GM12878 (cell line): ENCODE measurements at regions of chr4 and their contacts with region 1.

Region 1: GRCh38 chr4:87006676-87007527 is 72.1 kb downstream of the AFF1 start:
- DNase-seq: peak; percentile 71
- ATAC-seq: peak; percentile 82
- H3K4me3 ChIP-seq: peak overlapping the region; percentile 78
- H3K27ac ChIP-seq: peak overlapping the region; percentile 93
- H3K4me1 ChIP-seq: peaks cover 17% of the 10 kb centered on the region
- H3K27me3 ChIP-seq: no peaks in the 10 kb centered on the region
- CTCF ChIP-seq: peak in 2 of 3 experiments; percentile 33 to 34; a peak in 3 of 6 replicates
- EP300 ChIP-seq: 0 out of 4 replicates have a peak, but pooled peaks of 1 of the 2 experiments have one; percentile 17
- POLR2A ChIP-seq: peak; percentile 97
- RAD21 ChIP-seq: no peak

Region 2: DNA sequence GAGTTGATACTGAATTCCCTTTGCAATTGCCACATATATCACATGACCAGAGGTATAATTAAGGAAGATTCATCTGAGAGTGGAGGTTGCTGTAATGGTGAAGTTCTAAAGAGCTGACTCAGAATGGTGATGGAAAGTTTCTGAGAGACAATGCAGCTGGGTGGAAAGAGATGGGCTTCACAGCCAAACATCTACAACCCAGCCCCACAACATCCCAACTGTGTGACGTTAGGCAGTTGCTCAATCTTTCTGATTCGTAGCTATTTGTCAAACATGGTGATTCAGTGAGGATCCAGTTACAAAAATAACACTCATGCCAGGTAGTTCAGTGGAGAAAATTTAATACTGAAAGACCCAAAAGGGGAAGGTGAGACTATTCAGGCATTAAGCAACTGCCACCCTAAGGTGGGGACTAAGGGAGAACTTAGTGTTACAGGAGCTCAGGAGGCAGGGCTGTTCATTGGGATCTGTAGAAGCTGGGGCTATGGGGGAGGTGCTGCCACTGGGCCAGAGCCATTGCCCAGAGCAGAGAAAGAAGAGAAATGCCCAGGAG is 79.0 kb before region 1 on chr4:
- CTCF ChIA-PET with region 1: interaction called, 35 read pairs
- POLR2A ChIA-PET with region 1: interaction called, 123 read pairs
- RAD21 ChIA-PET with region 1: interaction called, 37 read pairs
- SMC1A ChIA-PET with region 1: interaction called, 97 read pairs
- in situ Hi-C with region 1: no loop called
- intact Hi-C with region 1: no loop called
- DNase-seq: no peak
- ATAC-seq: peak; percentile 12; the same call in 2 of the 3 replicates
- H3K4me3 ChIP-seq: no peak overlapping the region
- H3K27ac ChIP-seq: no peak overlapping the region; the same call in 1 of the 2 replicates
- H3K4me1 ChIP-seq: peaks cover 15% of the 10 kb centered on the region
- H3K27me3 ChIP-seq: no peaks in the 10 kb centered on the region
- CTCF ChIP-seq: no peak
- EP300 ChIP-seq: no peak
- POLR2A ChIP-seq: no peak
- RAD21 ChIP-seq: no peak

Region 3: GRCh38 chr4:86961605-86962295 is 45.2 kb before region 1 on chr4:
- CTCF ChIA-PET with region 1: interaction called, 10 read pairs
- POLR2A ChIA-PET with region 1: interaction called, 49 read pairs
- RAD21 ChIA-PET with region 1: interaction called, 22 read pairs
- SMC1A ChIA-PET with region 1: interaction called, 107 read pairs
- in situ Hi-C with region 1: no loop called
- intact Hi-C with region 1: loop called (anchors 2 kb)
- DNase-seq: peak; percentile 85
- ATAC-seq: peak; percentile 92
- H3K4me3 ChIP-seq: peak overlapping the region; percentile 61; the same call in 1 of the 2 replicates
- H3K27ac ChIP-seq: peak overlapping the region; percentile 80
- H3K4me1 ChIP-seq: peaks cover 70% of the 10 kb centered on the region
- H3K27me3 ChIP-seq: no peaks in the 10 kb centered on the region
- CTCF ChIP-seq: no peak
- EP300 ChIP-seq: peak; percentile 79 to 84; a peak in 3 of 4 replicates
- POLR2A ChIP-seq: peak; percentile 63
- RAD21 ChIP-seq: no peak

Region 4: DNA sequence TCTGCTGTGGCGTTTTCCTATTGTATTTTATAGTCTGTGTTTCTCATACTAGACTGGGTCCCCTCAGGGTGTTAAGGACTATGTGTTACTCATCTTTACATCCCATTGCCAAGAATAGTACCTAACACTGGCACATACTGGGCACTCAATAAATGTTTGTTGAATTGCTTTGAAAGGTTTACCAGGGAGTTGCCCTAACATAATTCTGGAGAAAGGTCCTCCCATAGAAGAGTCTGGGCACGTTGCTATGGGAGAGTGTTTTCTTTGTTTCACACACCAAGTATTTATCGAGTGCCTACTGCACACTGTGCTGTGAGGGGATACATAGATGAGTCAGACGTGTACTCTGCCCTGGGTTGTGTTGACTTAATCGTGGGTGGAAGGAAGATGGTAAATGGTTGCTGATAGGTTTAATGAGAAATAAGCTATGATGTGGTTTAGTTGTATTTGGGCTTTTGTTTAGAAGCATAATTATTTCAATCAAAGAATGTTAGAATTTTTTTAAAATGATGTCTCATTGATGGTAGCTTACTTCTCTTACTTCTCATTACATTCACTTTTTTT is 29.2 kb before region 1 on chr4:
- CTCF ChIA-PET with region 1: interaction called, 4 read pairs
- POLR2A ChIA-PET with region 1: interaction called, 9 read pairs
- RAD21 ChIA-PET with region 1: interaction called, 53 read pairs
- SMC1A ChIA-PET with region 1: interaction called, 18 read pairs
- in situ Hi-C with region 1: no loop called
- intact Hi-C with region 1: loop called (anchors 2 kb)
- DNase-seq: peak; percentile 67
- ATAC-seq: peak; percentile 96
- H3K4me3 ChIP-seq: peak overlapping the region; percentile 31; the same call in 1 of the 2 replicates
- H3K27ac ChIP-seq: peak overlapping the region; percentile 55
- H3K4me1 ChIP-seq: peaks cover 41% of the 10 kb centered on the region
- H3K27me3 ChIP-seq: no peaks in the 10 kb centered on the region
- CTCF ChIP-seq: no peak
- EP300 ChIP-seq: peak in 1 of 2 experiments; percentile 74; a peak in 1 of 4 replicates
- POLR2A ChIP-seq: no peak
- RAD21 ChIP-seq: no peak

Region 5: DNA sequence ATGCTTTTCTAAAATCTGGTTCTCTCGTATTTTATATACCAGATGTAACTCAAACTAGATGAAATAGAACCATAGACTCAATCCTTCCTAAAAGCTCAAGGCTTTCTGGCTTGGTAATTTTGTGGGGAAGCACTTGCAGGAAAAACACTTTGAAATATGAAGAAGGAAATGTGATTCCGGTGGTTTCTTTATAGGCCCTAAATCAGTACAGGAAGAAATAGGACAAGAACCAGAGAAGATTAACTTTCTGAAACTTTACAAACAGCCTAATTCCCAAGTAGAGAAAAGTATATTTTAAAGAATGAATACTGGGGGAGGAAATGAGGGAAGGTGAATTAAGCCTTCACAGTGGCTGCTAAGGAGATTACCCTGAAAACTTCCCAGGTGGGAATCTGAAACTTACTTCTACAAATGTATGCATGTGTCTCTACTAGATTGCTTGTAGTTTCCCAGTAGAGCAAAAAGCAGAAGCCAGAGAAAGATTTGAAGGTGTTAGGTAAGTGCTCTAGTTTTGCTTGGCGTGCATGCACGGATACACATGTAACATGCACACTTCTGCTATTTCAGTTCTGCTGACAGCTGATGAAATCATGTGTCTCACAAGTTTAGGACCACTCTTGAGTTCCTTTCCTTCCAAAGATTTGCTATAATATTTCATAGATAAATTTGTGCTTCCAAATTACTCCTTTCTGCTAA is 20.0 kb after region 1 on chr4:
- CTCF ChIA-PET with region 1: interaction called, 8 read pairs
- POLR2A ChIA-PET with region 1: interaction called, 26 read pairs
- RAD21 ChIA-PET with region 1: interaction called, 13 read pairs
- SMC1A ChIA-PET with region 1: interaction called, 26 read pairs
- in situ Hi-C with region 1: no loop called
- intact Hi-C with region 1: loop called (anchors 2 kb)
- DNase-seq: peak; percentile 91
- ATAC-seq: peak; percentile 92
- H3K4me3 ChIP-seq: peak overlapping the region; percentile 8; the same call in 1 of the 2 replicates
- H3K27ac ChIP-seq: peak overlapping the region; percentile 98
- H3K4me1 ChIP-seq: peaks cover 46% of the 10 kb centered on the region
- H3K27me3 ChIP-seq: no peaks in the 10 kb centered on the region
- CTCF ChIP-seq: no peak
- EP300 ChIP-seq: peak; percentile 68 to 73; a peak in 2 of 4 replicates
- POLR2A ChIP-seq: no peak
- RAD21 ChIP-seq: peak; percentile 30; the same call in 1 of the 2 replicates

Region 6: DNA sequence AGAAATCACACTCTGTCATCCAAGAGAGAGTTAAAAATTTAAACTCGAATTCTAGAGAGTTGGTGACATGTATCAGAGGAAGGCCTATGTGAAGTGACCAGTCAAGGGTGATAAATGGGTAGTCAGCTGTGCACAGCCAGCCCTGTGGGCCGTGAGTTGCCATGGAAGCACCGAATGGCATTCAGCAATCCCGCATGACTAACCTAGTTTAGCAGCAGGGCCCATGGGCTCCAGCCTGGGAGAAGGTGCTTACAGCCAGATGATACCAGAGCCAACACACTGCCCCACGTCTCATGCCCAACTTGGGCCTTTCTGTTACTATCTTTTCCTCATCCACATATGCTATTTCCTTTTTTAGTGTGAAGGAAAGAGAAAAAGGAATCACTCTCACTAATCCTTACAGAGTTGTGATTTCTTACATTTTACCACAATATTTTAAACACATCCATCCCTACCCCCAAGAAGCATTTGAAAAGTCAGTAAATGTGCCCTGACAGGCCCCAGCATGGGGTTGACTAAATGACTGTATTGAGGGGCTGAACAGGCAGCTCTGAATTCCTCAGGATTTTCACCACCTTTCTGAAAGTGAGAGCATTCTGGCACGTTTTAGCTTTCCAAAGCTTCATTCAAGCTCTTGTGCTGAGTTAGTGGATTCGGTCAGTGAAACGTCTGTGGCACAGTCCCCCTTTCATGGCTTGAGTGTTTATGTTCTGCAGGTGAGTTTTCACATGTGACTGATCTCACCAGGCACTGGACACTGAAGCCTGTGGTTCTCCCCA is 32.1 kb after region 1 on chr4:
- CTCF ChIA-PET with region 1: interaction called, 3 read pairs
- POLR2A ChIA-PET with region 1: interaction called, 4 read pairs
- RAD21 ChIA-PET with region 1: interaction called, 13 read pairs
- SMC1A ChIA-PET with region 1: interaction called, 16 read pairs
- in situ Hi-C with region 1: no loop called
- intact Hi-C with region 1: loop called (anchors 5 kb)
- DNase-seq: no peak
- ATAC-seq: peak; percentile 83
- H3K4me3 ChIP-seq: peak overlapping the region; percentile 5; the same call in 1 of the 2 replicates
- H3K27ac ChIP-seq: peak overlapping the region; percentile 3
- H3K4me1 ChIP-seq: peaks cover 52% of the 10 kb centered on the region
- H3K27me3 ChIP-seq: no peaks in the 10 kb centered on the region
- CTCF ChIP-seq: no peak
- EP300 ChIP-seq: no peak
- POLR2A ChIP-seq: no peak
- RAD21 ChIP-seq: no peak

Region 7: GRCh38 chr4:87073199-87074120 is 66.6 kb after region 1 on chr4:
- CTCF ChIA-PET with region 1: interaction called, 4 read pairs
- POLR2A ChIA-PET with region 1: interaction called, 8 read pairs
- RAD21 ChIA-PET with region 1: interaction called, 20 read pairs
- SMC1A ChIA-PET with region 1: interaction called, 10 read pairs
- in situ Hi-C with region 1: no loop called
- intact Hi-C with region 1: loop called (anchors 5 kb)
- DNase-seq: peak; percentile 93
- ATAC-seq: peak; percentile 93
- H3K4me3 ChIP-seq: peak overlapping the region; percentile 65; the same call in 1 of the 2 replicates
- H3K27ac ChIP-seq: peak overlapping the region; percentile 98
- H3K4me1 ChIP-seq: peaks cover 17% of the 10 kb centered on the region
- H3K27me3 ChIP-seq: no peaks in the 10 kb centered on the region
- CTCF ChIP-seq: no peak
- EP300 ChIP-seq: peak; percentile 65 to 67; a peak in 3 of 4 replicates
- POLR2A ChIP-seq: peak; percentile 62
- RAD21 ChIP-seq: no peak

Region 8: DNA sequence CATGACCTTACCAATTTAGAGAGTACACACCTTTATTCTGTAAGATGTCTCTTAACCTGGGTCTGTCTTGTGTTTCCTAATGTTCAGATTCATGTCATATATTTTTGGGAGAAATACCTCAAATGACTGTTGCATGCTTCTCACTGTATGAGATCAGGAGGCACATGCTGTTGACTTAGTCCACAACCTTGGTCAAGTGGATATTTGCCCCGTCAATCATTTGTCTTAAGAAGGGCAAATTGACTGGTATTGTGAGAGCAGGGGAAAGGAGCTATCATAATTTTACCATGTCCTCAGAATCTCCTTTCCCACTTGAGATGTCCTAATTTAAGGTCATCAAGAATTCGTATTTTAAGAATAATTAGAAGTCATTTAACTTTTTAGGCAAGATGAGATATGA is 426.4 kb after region 1 on chr4:
- CTCF ChIA-PET with region 1: no interaction called
- POLR2A ChIA-PET with region 1: no interaction called
- RAD21 ChIA-PET with region 1: no interaction called
- SMC1A ChIA-PET with region 1: no interaction called
- in situ Hi-C with region 1: no loop called
- intact Hi-C with region 1: no loop called
- DNase-seq: no peak
- ATAC-seq: no peak
- H3K4me3 ChIP-seq: no peak overlapping the region
- H3K27ac ChIP-seq: no peak overlapping the region
- H3K4me1 ChIP-seq: no peaks in the 10 kb centered on the region
- H3K27me3 ChIP-seq: no peaks in the 10 kb centered on the region
- CTCF ChIP-seq: no peak
- EP300 ChIP-seq: no peak
- POLR2A ChIP-seq: no peak
- RAD21 ChIP-seq: no peak